ENCODE measurements at regions of chr19 and their contacts with region 1.

Region 1: GRCh38 chr19:34838753-34839431 is 65.9 kb upstream of the ZNF599 start:
- DNase-seq: peak in 1 of 5 donors; percentile 25
- H3K4me3 ChIP-seq: no peak overlapping the region
- H3K4me3 Mint-ChIP-seq: peak overlapping the region in 4 of 7 donors; percentile 21 to 71 (median 53)
- H3K27ac ChIP-seq: no peak overlapping the region
- H3K27ac Mint-ChIP-seq: peak overlapping the region in 4 of 8 donors; percentile 23 to 92 (median 52)
- H3K4me1 ChIP-seq: peaks cover 3% of the 10 kb centered on the region
- H3K4me1 Mint-ChIP-seq: peaks cover 9 to 30% (median 15%) of the 10 kb centered on the region in 3 donors
- H3K27me3 ChIP-seq: no peaks in the 10 kb centered on the region
- H3K27me3 Mint-ChIP-seq: peaks cover 6% of the 10 kb centered on the region in 2 donors

Region 2: GRCh38 chr19:34918190-34918589 is 79.3 kb after region 1 on chr19:
- CTCF ChIA-PET with region 1: no interaction called
- POLR2A ChIA-PET with region 1: no interaction called
- DNase-seq: no peak
- H3K4me3 ChIP-seq: no peak overlapping the region
- H3K4me3 Mint-ChIP-seq: no peak overlapping the region
- H3K27ac ChIP-seq: no peak overlapping the region
- H3K27ac Mint-ChIP-seq: no peak overlapping the region
- H3K4me1 ChIP-seq: no peaks in the 10 kb centered on the region
- H3K4me1 Mint-ChIP-seq: no peaks in the 10 kb centered on the region
- H3K27me3 ChIP-seq: no peaks in the 10 kb centered on the region
- H3K27me3 Mint-ChIP-seq: peaks cover 8 to 12% of the 10 kb centered on the region in 2 donors

Region 3: GRCh38 chr19:34974646-34975045 is 135.8 kb after region 1 on chr19:
- CTCF ChIA-PET with region 1: interaction called, 11 read pairs
- POLR2A ChIA-PET with region 1: no interaction called
- DNase-seq: no peak
- H3K4me3 ChIP-seq: no peak overlapping the region
- H3K4me3 Mint-ChIP-seq: no peak overlapping the region
- H3K27ac ChIP-seq: no peak overlapping the region
- H3K27ac Mint-ChIP-seq: peak overlapping the region in 2 of 8 donors; percentile 34 to 80
- H3K4me1 ChIP-seq: peaks cover 20% of the 10 kb centered on the region
- H3K4me1 Mint-ChIP-seq: peaks cover 19 to 34% (median 27%) of the 10 kb centered on the region in 3 donors
- H3K27me3 ChIP-seq: no peaks in the 10 kb centered on the region
- H3K27me3 Mint-ChIP-seq: peaks cover 0 to 4% of the 10 kb centered on the region in 2 donors